HepG2 (cell line): ENCODE measurements at regions of chr2 and their contacts with region 1.

Region 1: GRCh38 chr2:101026253-101026701 is 24.2 kb downstream of the RPL31 start:
- DNase-seq: no peak
- ATAC-seq: no peak
- H3K4me3 ChIP-seq: no peak overlapping the region
- H3K27ac ChIP-seq: no peak overlapping the region
- H3K4me1 ChIP-seq: peaks cover 6% of the 10 kb centered on the region; the same call in 1 of the 2 replicates
- H3K27me3 ChIP-seq: no peaks in the 10 kb centered on the region
- CTCF ChIP-seq: no peak
- EP300 ChIP-seq: no peak
- POLR2A ChIP-seq: no peak
- RAD21 ChIP-seq: no peak

Region 2: GRCh38 chr2:101076581-101076980 is 50.3 kb after region 1 on chr2:
- CTCF ChIA-PET with region 1: no interaction called
- POLR2A ChIA-PET with region 1: no interaction called
- in situ Hi-C with region 1: no loop called
- intact Hi-C with region 1: loop called (anchors 1 kb)
- DNase-seq: no peak
- ATAC-seq: no peak
- H3K4me3 ChIP-seq: no peak overlapping the region
- H3K27ac ChIP-seq: no peak overlapping the region
- H3K4me1 ChIP-seq: peaks cover 15% of the 10 kb centered on the region
- H3K27me3 ChIP-seq: no peaks in the 10 kb centered on the region
- CTCF ChIP-seq: no peak
- EP300 ChIP-seq: no peak
- POLR2A ChIP-seq: no peak
- RAD21 ChIP-seq: no peak

Region 3: DNA sequence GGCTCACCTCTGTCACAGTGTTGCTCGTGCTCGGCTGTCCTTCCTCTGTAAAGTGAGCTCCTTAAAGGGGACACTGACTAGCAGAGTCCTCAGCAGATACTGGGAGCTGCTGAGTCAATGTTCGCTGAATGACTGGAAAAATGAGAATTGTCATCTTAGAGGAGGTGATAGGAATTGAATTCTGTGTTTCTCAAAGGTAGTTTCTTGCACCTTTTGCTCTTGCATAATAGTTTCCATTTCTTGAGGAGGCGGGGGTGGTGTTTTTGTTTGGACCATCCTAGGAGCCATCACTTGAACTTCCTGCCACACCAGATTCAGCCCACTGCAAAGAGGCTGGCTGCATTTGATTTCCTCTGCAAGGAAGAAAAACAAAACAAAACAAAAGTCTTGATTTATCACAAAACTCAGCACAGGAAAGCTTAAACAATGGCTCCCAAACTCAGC is 460.0 kb after region 1 on chr2:
- CTCF ChIA-PET with region 1: no interaction called
- POLR2A ChIA-PET with region 1: no interaction called
- in situ Hi-C with region 1: no loop called
- intact Hi-C with region 1: loop called (anchors 10 kb)
- DNase-seq: no peak
- ATAC-seq: no peak
- H3K4me3 ChIP-seq: no peak overlapping the region
- H3K27ac ChIP-seq: no peak overlapping the region
- H3K4me1 ChIP-seq: peaks cover 10% of the 10 kb centered on the region
- H3K27me3 ChIP-seq: peaks cover 2 to 28% of the 10 kb centered on the region in 2 experiments; a peak in 4 of 5 replicates
- CTCF ChIP-seq: no peak
- EP300 ChIP-seq: no peak
- POLR2A ChIP-seq: no peak
- RAD21 ChIP-seq: no peak